ENCODE measurements at regions of chr12 and their contacts with region 1.

Region 1: GRCh38 chr12:87066326-87066725 is 810.1 kb upstream of the MGAT4C start:
- DNase-seq: no peak
- H3K4me3 ChIP-seq: no peak overlapping the region
- H3K27ac ChIP-seq: no peak overlapping the region
- H3K4me1 ChIP-seq: no peaks in the 10 kb centered on the region
- H3K27me3 ChIP-seq: no peaks in the 10 kb centered on the region
- CTCF ChIP-seq: no peak
- POLR2A ChIP-seq: no peak

Region 2: GRCh38 chr12:85755760-85756159 is 1310.6 kb before region 1 on chr12:
- intact Hi-C with region 1: loop called (anchors 5 kb)
- DNase-seq: no peak
- H3K4me3 ChIP-seq: no peak overlapping the region
- H3K27ac ChIP-seq: no peak overlapping the region
- H3K4me1 ChIP-seq: no peaks in the 10 kb centered on the region
- H3K27me3 ChIP-seq: no peaks in the 10 kb centered on the region
- CTCF ChIP-seq: no peak
- POLR2A ChIP-seq: no peak

Region 3: GRCh38 chr12:87368259-87368658 is 301.9 kb after region 1 on chr12:
- intact Hi-C with region 1: no loop called
- DNase-seq: no peak
- H3K4me3 ChIP-seq: no peak overlapping the region
- H3K27ac ChIP-seq: no peak overlapping the region
- H3K4me1 ChIP-seq: no peaks in the 10 kb centered on the region
- H3K27me3 ChIP-seq: no peaks in the 10 kb centered on the region
- CTCF ChIP-seq: no peak
- POLR2A ChIP-seq: no peak